ENCODE measurements at regions of chr19 and their contacts with region 1.

Region 1: GRCh38 chr19:8654591-8655339 is 24.3 kb downstream of the NFILZ start:
- DNase-seq: peak; percentile 67 to 86
- ATAC-seq: peak; percentile 84 to 90 (median 87)
- H3K4me3 ChIP-seq: peak overlapping the region; percentile 43
- H3K4me3 Mint-ChIP-seq: peak overlapping the region; percentile 74
- H3K27ac ChIP-seq: peak overlapping the region; percentile 24
- H3K27ac Mint-ChIP-seq: peak overlapping the region in 1 of 2 donors; percentile 27
- H3K4me1 ChIP-seq: peaks cover 57% of the 10 kb centered on the region
- H3K4me1 Mint-ChIP-seq: peaks cover 37 to 43% of the 10 kb centered on the region in 2 donors
- H3K27me3 ChIP-seq: no peaks in the 10 kb centered on the region
- H3K27me3 Mint-ChIP-seq: peaks cover 0 to 7% of the 10 kb centered on the region in 2 donors
- CTCF ChIP-seq: peak; percentile 99

Region 2: DNA sequence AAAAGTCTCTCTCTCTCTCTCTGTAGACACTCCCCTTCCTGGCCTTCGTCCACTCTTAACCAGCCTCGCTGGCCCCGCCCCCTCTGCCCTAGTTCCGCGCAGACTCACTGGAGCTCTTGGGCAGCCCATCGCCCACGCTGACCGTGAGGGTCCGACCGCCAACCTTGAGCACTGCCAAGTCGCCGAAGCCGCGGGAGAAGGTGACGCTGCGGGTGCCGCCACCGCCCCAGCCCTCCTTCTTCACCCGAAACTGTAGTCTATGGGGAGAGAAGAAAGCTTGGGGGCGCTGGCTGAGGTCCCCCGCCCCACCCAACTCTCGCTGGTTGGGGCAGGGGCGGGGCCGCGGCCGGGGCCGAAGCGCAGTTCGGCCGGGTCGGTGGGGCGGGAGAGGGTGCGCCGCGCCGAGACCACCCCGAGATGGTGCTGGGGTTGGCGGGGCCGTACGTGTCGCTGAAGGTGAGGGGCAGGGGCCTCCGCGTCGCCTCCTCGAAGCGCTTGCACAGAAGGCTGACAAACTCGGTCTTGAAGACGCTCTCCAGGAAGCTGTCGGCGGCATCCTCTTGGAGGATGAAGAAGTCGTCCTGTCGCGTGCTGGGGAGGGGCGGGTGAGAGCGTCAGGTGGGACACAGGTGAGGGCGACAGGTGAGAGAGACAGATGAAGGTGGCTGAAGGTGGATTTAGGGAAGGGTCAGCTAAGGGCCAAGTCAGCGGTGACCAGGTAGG is 128.3 kb before region 1 on chr19:
- intact Hi-C with region 1: no loop called
- DNase-seq: no peak
- ATAC-seq: peak in 1 of 3 donors; percentile 27
- H3K4me3 ChIP-seq: no peak overlapping the region
- H3K4me3 Mint-ChIP-seq: no peak overlapping the region
- H3K27ac ChIP-seq: no peak overlapping the region
- H3K27ac Mint-ChIP-seq: peak overlapping the region in 1 of 2 donors; percentile 63
- H3K4me1 ChIP-seq: no peaks in the 10 kb centered on the region
- H3K4me1 Mint-ChIP-seq: peaks cover 22 to 23% of the 10 kb centered on the region in 2 donors
- H3K27me3 ChIP-seq: no peaks in the 10 kb centered on the region
- H3K27me3 Mint-ChIP-seq: no peaks in the 10 kb centered on the region
- CTCF ChIP-seq: no peak

Region 3: GRCh38 chr19:8681345-8682029 is 26.7 kb after region 1 on chr19:
- intact Hi-C with region 1: no loop called
- DNase-seq: no peak
- ATAC-seq: no peak
- H3K4me3 ChIP-seq: no peak overlapping the region
- H3K4me3 Mint-ChIP-seq: peak overlapping the region; percentile 4
- H3K27ac ChIP-seq: no peak overlapping the region
- H3K27ac Mint-ChIP-seq: peak overlapping the region in 1 of 2 donors; percentile 30
- H3K4me1 ChIP-seq: peaks cover 42% of the 10 kb centered on the region
- H3K4me1 Mint-ChIP-seq: peaks cover 37 to 57% of the 10 kb centered on the region in 2 donors
- H3K27me3 ChIP-seq: no peaks in the 10 kb centered on the region
- H3K27me3 Mint-ChIP-seq: peaks cover 0 to 4% of the 10 kb centered on the region in 2 donors
- CTCF ChIP-seq: no peak

Region 4: GRCh38 chr19:8697671-8698432 is 43.1 kb after region 1 on chr19:
- intact Hi-C with region 1: loop called (anchors 1 kb)
- DNase-seq: peak in 1 of 2 donors; percentile 28
- ATAC-seq: no peak
- H3K4me3 ChIP-seq: no peak overlapping the region
- H3K4me3 Mint-ChIP-seq: no peak overlapping the region
- H3K27ac ChIP-seq: no peak overlapping the region
- H3K27ac Mint-ChIP-seq: no peak overlapping the region
- H3K4me1 ChIP-seq: peaks cover 59% of the 10 kb centered on the region
- H3K4me1 Mint-ChIP-seq: peaks cover 30 to 56% of the 10 kb centered on the region in 2 donors
- H3K27me3 ChIP-seq: no peaks in the 10 kb centered on the region
- H3K27me3 Mint-ChIP-seq: peaks cover 0 to 12% of the 10 kb centered on the region in 2 donors
- CTCF ChIP-seq: no peak

Region 5: GRCh38 chr19:9075064-9075949 is 420.5 kb after region 1 on chr19:
- intact Hi-C with region 1: loop called (anchors 5 kb)
- DNase-seq: no peak
- ATAC-seq: peak in 1 of 3 donors; percentile 31
- H3K4me3 ChIP-seq: no peak overlapping the region
- H3K4me3 Mint-ChIP-seq: no peak overlapping the region
- H3K27ac ChIP-seq: no peak overlapping the region
- H3K27ac Mint-ChIP-seq: no peak overlapping the region
- H3K4me1 ChIP-seq: peaks cover 2% of the 10 kb centered on the region
- H3K4me1 Mint-ChIP-seq: peaks cover 0 to 3% of the 10 kb centered on the region in 2 donors
- H3K27me3 ChIP-seq: no peaks in the 10 kb centered on the region
- H3K27me3 Mint-ChIP-seq: no peaks in the 10 kb centered on the region
- CTCF ChIP-seq: no peak